ENCODE measurements at regions of chr16 and their contacts with region 1.

Region 1: DNA sequence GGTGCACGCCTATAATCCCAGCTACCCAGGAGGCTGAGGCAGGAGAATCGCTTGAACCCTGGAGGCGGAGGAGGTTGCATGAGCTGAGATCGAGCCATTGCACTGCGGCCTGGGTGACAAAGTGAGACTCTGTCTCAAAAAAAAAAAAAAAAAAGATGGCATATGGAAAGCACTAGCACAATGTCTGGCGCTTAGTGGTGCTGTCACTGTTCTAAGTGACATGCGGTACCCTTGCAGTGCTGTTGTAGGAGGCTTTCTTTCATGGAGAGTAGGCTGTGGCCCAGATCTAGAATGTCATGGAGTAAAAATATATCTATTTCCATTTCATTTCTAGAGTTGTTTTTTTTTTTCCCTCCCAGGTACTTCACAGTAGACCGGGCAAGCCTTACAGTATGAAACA is 14.6 kb upstream of the METTL9 start:
- DNase-seq: no peak
- H3K4me3 ChIP-seq: no peak overlapping the region
- H3K27ac ChIP-seq: no peak overlapping the region
- H3K4me1 ChIP-seq: no peaks in the 10 kb centered on the region
- H3K27me3 ChIP-seq: no peaks in the 10 kb centered on the region
- CTCF ChIP-seq: no peak

Region 2: GRCh38 chr16:21233521-21234150 is 351.2 kb before region 1 on chr16 and contains the start of gene ANKS4B:
- intact Hi-C with region 1: no loop called
- DNase-seq: no peak
- H3K4me3 ChIP-seq: no peak within 1 kb of the TSS
- H3K27ac ChIP-seq: no peak within 1 kb of the TSS
- H3K4me1 ChIP-seq: no peaks in the 10 kb centered on the region
- H3K27me3 ChIP-seq: no peaks in the 10 kb centered on the region
- CTCF ChIP-seq: no peak
- total RNA-seq, gene ANKS4B: not detected

Region 3: GRCh38 chr16:21645261-21645721 is 60.5 kb after region 1 on chr16:
- intact Hi-C with region 1: loop called (anchors 1 kb)
- DNase-seq: no peak
- H3K4me3 ChIP-seq: peak overlapping the region; percentile 18 to 20
- H3K27ac ChIP-seq: peak overlapping the region; percentile 7 to 13
- H3K4me1 ChIP-seq: no peaks in the 10 kb centered on the region
- H3K27me3 ChIP-seq: no peaks in the 10 kb centered on the region
- CTCF ChIP-seq: no peak

Region 4: DNA sequence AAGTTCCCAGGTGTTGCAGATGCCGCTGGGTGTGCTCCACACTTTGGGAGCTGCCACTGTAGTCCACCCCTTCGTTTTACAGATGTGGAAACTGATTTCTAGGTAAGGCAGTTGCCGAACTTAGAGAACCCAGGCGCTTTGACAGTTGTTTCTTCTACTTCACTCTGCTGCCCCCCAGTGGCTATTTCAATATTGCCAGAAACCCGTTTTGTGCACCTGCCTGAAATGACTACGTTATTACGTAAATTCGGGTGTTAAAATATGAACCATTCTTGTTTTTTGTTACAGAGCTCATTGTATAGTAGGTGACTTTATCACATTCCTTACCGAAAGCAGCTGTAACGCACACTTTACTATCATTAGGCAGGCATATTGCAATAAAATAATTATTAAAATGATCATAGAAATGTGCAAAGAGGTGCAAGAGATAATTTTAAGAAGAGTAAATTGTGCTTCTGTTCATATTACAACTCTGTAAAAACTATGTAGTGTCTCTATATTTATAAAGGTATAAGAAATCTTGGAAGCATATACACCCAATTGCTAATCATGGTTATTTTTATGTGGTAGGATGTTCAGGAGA is 123.8 kb after region 1 on chr16:
- intact Hi-C with region 1: loop called (anchors 5 kb)
- DNase-seq: peak; percentile 23 to 85
- H3K4me3 ChIP-seq: no peak overlapping the region
- H3K27ac ChIP-seq: no peak overlapping the region
- H3K4me1 ChIP-seq: no peaks in the 10 kb centered on the region
- H3K27me3 ChIP-seq: peaks cover 4% of the 10 kb centered on the region
- CTCF ChIP-seq: peak; percentile 64 to 84 (median 75)

Measured in ascending aorta (tissue), 2 donors.